Heart right ventricle (tissue), 16 donors: ENCODE measurements at regions of chr7 and their contacts with region 1.

Region 1: DNA sequence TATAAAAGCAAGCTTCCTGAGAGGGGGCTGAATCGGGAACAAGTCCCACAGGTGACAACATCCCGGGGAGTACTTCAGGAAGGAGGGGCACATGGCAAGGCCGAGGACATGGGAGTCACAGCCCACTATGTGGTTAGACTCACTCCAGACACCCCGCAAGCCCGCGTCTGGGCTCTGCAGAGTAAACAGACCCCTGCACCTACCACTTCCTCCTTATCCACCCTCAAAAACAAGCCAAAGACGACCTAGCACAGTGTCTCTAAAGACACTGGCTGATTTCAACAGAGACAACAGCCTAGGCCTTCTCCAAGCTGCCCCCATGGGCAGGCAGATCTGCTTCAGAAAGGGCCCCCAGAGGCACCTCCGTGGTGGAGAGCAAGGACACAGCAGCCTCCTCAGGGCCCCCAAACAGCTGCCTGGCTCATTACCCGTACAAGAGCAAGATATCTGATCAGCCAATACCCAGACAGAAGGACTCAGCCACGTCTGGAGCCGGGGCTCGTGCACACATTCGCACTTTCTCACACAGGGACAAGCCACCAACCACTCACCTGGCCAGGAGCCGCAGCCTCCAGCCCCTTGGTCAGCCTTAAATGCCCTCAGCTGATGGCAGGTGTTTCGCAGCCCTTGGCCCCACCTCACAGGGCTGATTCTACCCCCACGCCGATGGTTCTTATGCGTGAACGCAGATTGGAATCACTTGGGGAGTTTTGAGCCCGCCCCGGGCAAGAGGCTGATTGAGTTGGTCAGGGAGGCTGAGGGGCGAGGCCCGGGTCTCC is 10.7 kb upstream of the KPNA7 start:
- DNase-seq: no peak
- ATAC-seq: no peak
- H3K4me3 ChIP-seq: no peak overlapping the region
- H3K27ac ChIP-seq: no peak overlapping the region
- H3K4me1 ChIP-seq: no peaks in the 10 kb centered on the region
- H3K27me3 ChIP-seq: peaks cover 0 to 9% (median 4%) of the 10 kb centered on the region in 7 donors
- CTCF ChIP-seq: no peak

Region 2: GRCh38 chr7:99184532-99185218 is 33.9 kb before region 1 on chr7:
- intact Hi-C with region 1: no loop called
- DNase-seq: no peak
- ATAC-seq: no peak
- H3K4me3 ChIP-seq: no peak overlapping the region
- H3K27ac ChIP-seq: no peak overlapping the region
- H3K4me1 ChIP-seq: no peaks in the 10 kb centered on the region
- H3K27me3 ChIP-seq: peaks cover 0 to 5% (median 0%) of the 10 kb centered on the region in 7 donors
- CTCF ChIP-seq: no peak

Region 3: GRCh38 chr7:99278177-99278576 is 59.6 kb after region 1 on chr7:
- intact Hi-C with region 1: loop called in 1 of 10 experiments (anchors 1 kb)
- DNase-seq: no peak
- ATAC-seq: no peak
- H3K4me3 ChIP-seq: no peak overlapping the region
- H3K27ac ChIP-seq: no peak overlapping the region
- H3K4me1 ChIP-seq: peaks cover 0 to 5% (median 0%) of the 10 kb centered on the region in 9 donors
- H3K27me3 ChIP-seq: no peaks in the 10 kb centered on the region
- CTCF ChIP-seq: no peak